Prostate gland (tissue), 2 donors: ENCODE measurements at regions of chr2 and their contacts with region 1.

Region 1: GRCh38 chr2:30503007-30503694 is 56.1 kb downstream of the LCLAT1 start:
- DNase-seq: no peak
- H3K4me3 ChIP-seq: no peak overlapping the region
- H3K27ac ChIP-seq: no peak overlapping the region
- H3K4me1 ChIP-seq: no peaks in the 10 kb centered on the region
- H3K27me3 ChIP-seq: no peaks in the 10 kb centered on the region
- CTCF ChIP-seq: peak in 2 of 4 experiments; percentile 25 to 29
- POLR2A ChIP-seq: no peak

Region 2: DNA sequence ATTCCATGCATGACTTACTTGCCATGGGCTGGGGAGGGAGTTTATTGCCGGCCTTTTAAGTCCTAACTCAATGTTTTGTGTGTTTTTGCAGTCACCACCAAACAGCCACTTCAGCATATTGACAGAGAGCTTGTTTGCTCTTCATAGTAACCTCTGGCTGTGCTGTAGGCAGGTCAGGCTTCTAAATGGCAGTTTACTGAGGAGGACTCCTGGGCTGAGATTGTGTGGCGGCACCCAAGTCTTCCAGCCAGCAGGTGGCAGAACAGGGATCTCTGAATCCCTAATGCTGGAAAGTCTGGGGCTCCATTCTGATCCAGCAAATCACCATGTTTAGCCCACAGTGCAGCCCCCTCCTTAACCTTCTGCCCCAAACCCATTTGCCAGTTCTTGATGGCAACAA is 182.8 kb after region 1 on chr2:
- intact Hi-C with region 1: loop called (anchors 10 kb)
- DNase-seq: no peak
- H3K4me3 ChIP-seq: no peak overlapping the region
- H3K27ac ChIP-seq: no peak overlapping the region
- H3K4me1 ChIP-seq: no peaks in the 10 kb centered on the region
- H3K27me3 ChIP-seq: no peaks in the 10 kb centered on the region
- CTCF ChIP-seq: no peak
- POLR2A ChIP-seq: no peak